Motor neuron (in vitro differentiated cells): ENCODE measurements at regions of chr6 and their contacts with region 1.

Region 1: DNA sequence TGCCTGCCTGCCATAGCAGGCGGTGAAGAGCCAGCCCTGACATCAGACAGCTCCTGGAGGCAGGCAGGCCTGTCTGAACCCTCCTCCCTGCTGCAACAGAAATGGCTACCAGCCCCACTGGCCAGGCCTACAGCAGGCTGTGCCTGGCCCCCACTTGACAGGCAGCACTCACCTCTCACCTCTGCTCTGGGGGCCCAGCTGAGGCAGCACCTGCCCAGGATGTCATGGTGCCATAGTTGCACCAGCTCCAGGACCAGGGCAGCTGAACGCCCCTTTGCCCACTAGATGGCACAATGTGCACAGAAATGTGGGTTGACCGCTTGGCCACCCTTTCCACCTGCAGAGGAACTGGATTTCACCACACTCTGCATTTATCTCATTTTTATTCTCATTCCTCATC is 30.6 kb downstream of the MRPL14 start:
- ATAC-seq: peak; percentile 77 to 93 (median 91)
- H3K4me3 ChIP-seq: no peak overlapping the region
- H3K27ac ChIP-seq: no peak overlapping the region
- H3K4me1 ChIP-seq: no peaks in the 10 kb centered on the region

Region 2: DNA sequence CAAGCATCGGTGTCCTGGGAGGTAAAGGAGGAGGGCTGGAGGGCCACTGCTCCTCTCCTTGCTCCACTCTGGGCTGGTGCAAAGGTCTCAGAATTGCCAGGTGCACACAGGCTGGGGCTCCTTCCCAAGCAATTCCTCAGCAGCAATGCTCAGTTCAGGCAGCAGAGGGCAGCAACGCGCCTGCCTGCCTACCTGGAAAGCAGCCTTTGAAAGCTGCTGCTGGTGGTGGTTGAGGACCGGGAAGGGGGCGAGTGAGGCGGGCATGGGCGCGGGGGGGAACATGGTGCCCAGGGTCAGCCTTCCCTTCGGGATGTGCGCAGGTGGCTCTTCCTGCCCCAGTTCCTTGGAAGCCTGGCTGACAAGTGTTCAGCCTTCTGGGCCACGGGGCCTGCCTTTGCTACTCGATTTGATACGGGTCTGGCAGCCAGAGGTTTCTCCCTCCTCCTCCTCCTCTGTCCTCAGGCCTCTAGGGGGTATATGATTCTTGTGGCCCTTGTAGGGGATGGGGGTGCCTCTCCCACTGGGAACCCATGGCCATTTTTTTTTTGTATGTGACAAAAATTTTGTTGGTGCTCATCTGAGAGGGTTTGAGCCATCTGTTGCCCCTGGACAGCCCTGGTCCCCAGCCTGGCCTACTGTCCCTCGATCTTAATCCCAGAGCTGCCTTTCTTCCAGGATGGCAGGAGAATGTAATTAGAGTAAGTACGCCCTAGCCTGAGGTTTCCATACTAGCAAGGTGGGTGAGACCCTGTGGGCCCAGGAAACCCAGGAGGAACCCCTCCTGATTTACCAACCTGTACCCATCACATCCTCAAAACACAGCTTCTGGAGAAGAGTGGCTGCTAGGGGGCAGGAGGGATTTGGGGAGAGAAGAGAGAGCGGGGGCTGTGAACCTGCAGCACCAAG is 429.1 kb before region 1 on chr6:
- in situ Hi-C with region 1: loop called in 5 of 9 experiments (anchors 25 kb)
- ATAC-seq: peak; percentile 29 to 85 (median 76)
- H3K4me3 ChIP-seq: no peak overlapping the region
- H3K27ac ChIP-seq: peak overlapping the region in 1 of 2 donors; percentile 25
- H3K4me1 ChIP-seq: peaks cover 13 to 34% of the 10 kb centered on the region in 2 donors

Region 3: GRCh38 chr6:43769526-43770416 is 326.8 kb before region 1 on chr6 and contains the start of gene VEGFA:
- in situ Hi-C with region 1: loop called in 2 of 9 experiments (anchors 25 kb)
- ATAC-seq: peak; percentile 44 to 77 (median 70)
- H3K4me3 ChIP-seq: peak within 1 kb of the TSS; percentile 56 to 97 (median 91)
- H3K27ac ChIP-seq: peak within 1 kb of the TSS; percentile 97 to 99
- H3K4me1 ChIP-seq: peaks cover 10 to 29% of the 10 kb centered on the region in 2 donors
- total RNA-seq, gene VEGFA: 19.9 to 266 (median 164) TPM

Region 4: DNA sequence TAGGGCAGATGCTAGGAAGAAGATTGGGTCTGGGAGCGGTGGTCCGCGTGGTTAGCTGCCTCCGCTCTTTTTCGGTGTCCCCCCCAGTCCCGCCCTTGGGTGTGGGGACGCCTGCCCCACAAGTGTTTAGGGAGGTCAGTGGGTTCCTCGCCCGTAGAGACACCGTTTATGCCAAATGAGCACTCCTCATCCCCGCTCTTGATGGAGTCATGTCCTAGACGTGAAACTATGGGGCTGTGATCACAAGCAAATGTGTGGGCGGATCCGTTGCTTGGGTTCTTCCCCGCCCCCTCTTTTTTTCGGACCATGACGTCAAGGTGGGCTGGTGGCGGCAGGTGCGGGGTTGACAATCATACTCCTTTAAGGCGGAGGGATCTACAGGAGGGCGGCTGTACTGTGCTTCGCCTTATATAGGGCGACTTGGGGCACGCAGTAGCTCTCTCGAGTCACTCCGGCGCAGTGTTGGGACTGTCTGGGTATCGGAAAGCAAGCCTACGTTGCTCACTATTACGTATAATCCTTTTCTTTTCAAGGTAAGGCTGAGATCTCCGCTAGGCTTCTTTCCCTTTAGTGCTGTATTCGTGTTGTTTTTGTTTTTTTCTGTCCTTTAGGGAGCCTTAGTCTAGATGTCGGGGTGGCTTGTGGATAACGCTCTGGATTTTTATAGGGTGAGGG is 150.2 kb after region 1 on chr6 and contains the start of gene HSP90AB1:
- in situ Hi-C with region 1: loop called in 1 of 9 experiments (anchors 25 kb)
- ATAC-seq: peak; percentile 66 to 78 (median 68)
- H3K4me3 ChIP-seq: peak within 1 kb of the TSS; percentile 89 to 98 (median 95)
- H3K27ac ChIP-seq: peak within 1 kb of the TSS; percentile 96 to 97
- H3K4me1 ChIP-seq: peaks cover 19 to 29% of the 10 kb centered on the region in 2 donors
- total RNA-seq, gene HSP90AB1: 588 to 1,345 (median 878) TPM